ENCODE measurements at regions of chr22 and their contacts with region 1.

Region 1: GRCh38 chr22:46309526-46310085 is 12.9 kb downstream of the GTSE1 start:
- DNase-seq: no peak
- H3K4me3 ChIP-seq: no peak overlapping the region
- H3K27ac ChIP-seq: no peak overlapping the region
- H3K4me1 ChIP-seq: peaks cover 0 to 10% (median 0%) of the 10 kb centered on the region in 3 donors
- H3K27me3 ChIP-seq: no peaks in the 10 kb centered on the region
- CTCF ChIP-seq: no peak
- POLR2A ChIP-seq: no peak

Region 2: GRCh38 chr22:45994491-45995404 is 314.9 kb before region 1 on chr22:
- intact Hi-C with region 1: loop called (anchors 5 kb)
- DNase-seq: no peak
- H3K4me3 ChIP-seq: no peak overlapping the region
- H3K27ac ChIP-seq: no peak overlapping the region
- H3K4me1 ChIP-seq: peaks cover 32 to 54% (median 42%) of the 10 kb centered on the region in 3 donors
- H3K27me3 ChIP-seq: no peaks in the 10 kb centered on the region
- CTCF ChIP-seq: peak; percentile 90 to 98 (median 96)
- POLR2A ChIP-seq: no peak

Region 3: DNA sequence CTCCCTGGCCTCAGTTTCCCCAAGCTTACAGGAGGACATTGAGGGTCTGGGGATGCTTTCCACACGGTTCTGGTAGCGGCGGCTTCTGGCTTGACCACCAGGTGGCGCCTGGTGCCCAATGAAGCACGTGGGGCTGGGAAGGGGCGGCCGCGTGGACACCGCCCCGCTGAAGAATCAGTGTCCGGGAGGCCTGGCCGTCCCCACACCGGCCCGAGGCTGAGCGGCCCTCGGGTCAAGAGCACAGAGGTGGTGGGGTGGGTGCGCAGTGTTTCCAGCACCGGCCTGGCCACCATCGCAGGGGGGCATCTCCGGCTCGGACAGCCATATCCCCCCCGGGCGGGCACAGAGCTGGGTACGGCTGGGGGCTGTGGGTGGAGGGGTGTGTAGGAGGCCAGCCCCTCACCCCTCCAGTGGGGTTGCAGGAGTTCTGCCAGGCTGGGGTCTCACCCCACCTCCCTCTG is 187.1 kb before region 1 on chr22:
- intact Hi-C with region 1: loop called (anchors 5 kb)
- DNase-seq: no peak
- H3K4me3 ChIP-seq: peak overlapping the region in 2 of 4 donors; percentile 4 to 28
- H3K27ac ChIP-seq: no peak overlapping the region
- H3K4me1 ChIP-seq: peaks cover 3 to 43% (median 13%) of the 10 kb centered on the region in 3 donors
- H3K27me3 ChIP-seq: no peaks in the 10 kb centered on the region
- CTCF ChIP-seq: peak; percentile 89 to 95 (median 92)
- POLR2A ChIP-seq: no peak